GM12878 (cell line): ENCODE measurements at regions of chr1 and their contacts with region 1.

Region 1: GRCh38 chr1:163410073-163410999 is 88.6 kb downstream of the NUF2 start:
- DNase-seq: no peak
- ATAC-seq: peak; percentile 55
- H3K4me3 ChIP-seq: no peak overlapping the region
- H3K27ac ChIP-seq: no peak overlapping the region
- H3K4me1 ChIP-seq: peaks cover 9% of the 10 kb centered on the region
- H3K27me3 ChIP-seq: no peaks in the 10 kb centered on the region
- CTCF ChIP-seq: peak; percentile 73 to 84 (median 82)
- EP300 ChIP-seq: no peak
- POLR2A ChIP-seq: no peak
- RAD21 ChIP-seq: peak; percentile 91

Region 2: DNA sequence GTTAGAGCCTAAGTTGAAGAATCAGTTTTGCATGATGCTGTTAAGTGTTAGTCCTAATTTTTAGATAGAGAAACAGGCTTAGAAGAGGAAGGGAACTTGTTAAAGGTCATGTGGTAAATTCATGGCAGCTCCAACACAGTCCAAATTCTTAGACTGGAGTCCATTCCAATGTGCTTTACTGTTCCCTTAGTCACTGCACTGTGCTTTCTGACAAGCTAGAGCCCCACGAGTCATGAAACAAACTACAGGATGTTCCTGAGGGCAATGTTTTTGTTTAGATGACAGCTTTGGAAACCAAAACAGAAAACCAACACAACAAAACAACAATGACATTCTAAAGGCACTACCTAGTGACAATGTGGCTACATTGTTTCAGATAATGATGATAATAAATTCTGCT is 364.3 kb before region 1 on chr1:
- CTCF ChIA-PET with region 1: no interaction called
- POLR2A ChIA-PET with region 1: no interaction called
- RAD21 ChIA-PET with region 1: no interaction called
- SMC1A ChIA-PET with region 1: no interaction called
- in situ Hi-C with region 1: no loop called
- intact Hi-C with region 1: no loop called
- DNase-seq: no peak
- ATAC-seq: no peak
- H3K4me3 ChIP-seq: no peak overlapping the region
- H3K27ac ChIP-seq: no peak overlapping the region
- H3K4me1 ChIP-seq: no peaks in the 10 kb centered on the region
- H3K27me3 ChIP-seq: 0 out of 4 replicates have a peak, but pooled peaks cover 0 to 3% of the 10 kb centered on the region in 2 experiments
- CTCF ChIP-seq: no peak
- EP300 ChIP-seq: no peak
- POLR2A ChIP-seq: no peak
- RAD21 ChIP-seq: no peak

Region 3: DNA sequence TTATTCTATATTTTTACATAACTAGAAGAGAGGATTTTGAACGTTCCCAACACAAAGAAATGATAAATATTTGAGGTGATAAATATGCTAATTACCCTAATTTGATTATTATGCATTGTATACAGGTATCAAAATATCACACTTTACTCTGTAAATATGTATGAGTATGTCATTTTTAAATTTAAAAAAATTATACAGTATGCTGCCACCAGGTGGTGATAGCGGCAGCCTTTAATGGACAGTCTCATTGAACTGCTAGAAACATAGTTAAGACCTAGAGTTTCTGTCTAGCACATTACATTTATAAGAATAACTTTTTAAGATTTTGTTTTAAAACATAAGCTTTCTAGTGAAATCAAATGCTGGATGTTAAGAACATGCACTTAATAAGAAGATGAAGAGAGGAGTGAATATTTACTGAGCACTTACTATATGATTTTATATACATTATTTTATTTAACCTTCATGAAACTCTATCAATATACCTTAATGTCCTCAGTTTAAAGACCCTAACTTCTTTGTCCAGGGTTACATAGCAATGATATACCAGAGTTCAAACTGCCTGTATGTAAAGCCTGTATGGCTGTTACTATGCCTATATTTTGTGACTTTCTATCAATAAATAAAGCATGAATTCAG is 118.5 kb after region 1 on chr1:
- CTCF ChIA-PET with region 1: interaction called, 4 read pairs
- POLR2A ChIA-PET with region 1: no interaction called
- RAD21 ChIA-PET with region 1: no interaction called
- SMC1A ChIA-PET with region 1: no interaction called
- in situ Hi-C with region 1: no loop called
- intact Hi-C with region 1: loop called (anchors 1 kb)
- DNase-seq: no peak
- ATAC-seq: peak; percentile 77
- H3K4me3 ChIP-seq: no peak overlapping the region
- H3K27ac ChIP-seq: no peak overlapping the region
- H3K4me1 ChIP-seq: no peaks in the 10 kb centered on the region
- H3K27me3 ChIP-seq: no peaks in the 10 kb centered on the region
- CTCF ChIP-seq: peak; percentile 44 to 52 (median 48)
- EP300 ChIP-seq: no peak
- POLR2A ChIP-seq: no peak
- RAD21 ChIP-seq: peak; percentile 63

Region 4: GRCh38 chr1:163701783-163702374 is 291.5 kb after region 1 on chr1:
- CTCF ChIA-PET with region 1: no interaction called
- POLR2A ChIA-PET with region 1: no interaction called
- RAD21 ChIA-PET with region 1: no interaction called
- SMC1A ChIA-PET with region 1: no interaction called
- in situ Hi-C with region 1: no loop called
- intact Hi-C with region 1: loop called (anchors 2 kb)
- DNase-seq: no peak
- ATAC-seq: no peak
- H3K4me3 ChIP-seq: no peak overlapping the region
- H3K27ac ChIP-seq: no peak overlapping the region
- H3K4me1 ChIP-seq: peaks cover 3% of the 10 kb centered on the region; the same call in 1 of the 2 replicates
- H3K27me3 ChIP-seq: no peaks in the 10 kb centered on the region
- CTCF ChIP-seq: no peak; a peak in 1 of 6 replicates
- EP300 ChIP-seq: no peak
- POLR2A ChIP-seq: no peak
- RAD21 ChIP-seq: no peak